K562 (cell line): ENCODE measurements at regions of chr1 and their contacts with region 1.

Region 1: GRCh38 chr1:152047730-152048402 is 11.1 kb upstream of the S100A11 start:
- DNase-seq: peak; percentile 85 to 97 (median 88)
- ATAC-seq: peak; percentile 96
- H3K4me3 ChIP-seq: peak overlapping the region; percentile 32
- H3K27ac ChIP-seq: peak overlapping the region; percentile 97
- H3K4me1 ChIP-seq: peaks cover 14 to 19% of the 10 kb centered on the region in 2 experiments
- H3K27me3 ChIP-seq: peaks cover 0 to 3% of the 10 kb centered on the region in 2 experiments; a peak in 1 of 5 replicates
- CTCF ChIP-seq: peak; percentile 73 to 88 (median 76)
- EP300 ChIP-seq: peak; percentile 76
- POLR2A ChIP-seq: peak; percentile 91
- RAD21 ChIP-seq: peak in 1 of 2 experiments; percentile 7; a peak in 1 of 4 replicates

Region 2: DNA sequence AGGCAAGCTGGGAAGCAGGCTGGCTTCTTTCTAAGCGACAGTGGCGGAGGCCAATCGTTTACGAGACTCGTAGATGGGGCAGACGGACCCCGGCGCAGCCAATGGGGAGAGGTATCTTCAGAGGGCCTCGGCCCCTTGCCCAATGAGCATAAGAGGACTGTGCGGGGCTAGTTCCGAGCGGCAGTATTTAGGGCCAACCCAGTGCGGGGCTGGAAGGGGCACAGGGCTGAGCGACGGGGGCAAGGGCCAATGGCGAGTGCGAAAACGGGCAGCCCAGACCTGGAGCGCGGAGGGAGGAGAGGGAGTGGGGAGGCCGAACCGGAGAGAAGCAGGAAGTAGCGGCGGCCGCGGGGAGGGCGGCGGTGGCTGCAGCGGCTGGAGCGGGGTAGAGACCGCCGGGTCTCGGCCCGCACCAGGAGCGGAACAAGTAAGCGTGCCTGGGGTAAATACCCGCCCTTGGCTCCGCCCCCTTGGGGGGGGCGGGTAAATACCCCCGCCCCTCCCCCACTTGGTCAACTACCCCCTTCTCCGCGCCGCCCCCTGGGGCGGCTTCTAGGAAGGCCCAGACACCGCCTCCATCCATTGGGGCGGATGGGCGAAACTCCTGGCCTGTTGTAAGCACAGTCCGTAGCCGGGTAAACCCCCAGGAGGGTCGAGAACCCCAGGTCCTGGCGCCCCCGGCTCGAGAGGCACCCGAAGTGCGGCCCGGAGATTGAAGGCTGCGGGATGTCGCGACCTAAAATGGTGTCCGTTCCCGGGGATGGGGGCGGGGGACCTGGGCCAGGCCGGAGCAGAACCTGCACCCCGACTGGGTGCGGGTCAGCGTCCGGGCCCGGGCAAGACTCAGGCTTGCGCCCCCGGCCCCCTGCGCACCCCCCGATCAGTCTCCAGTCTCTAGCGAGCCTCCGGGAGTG is 765.6 kb before region 1 on chr1 and contains the start of gene ZNF687:
- CTCF ChIA-PET with region 1: no interaction called
- POLR2A ChIA-PET with region 1: no interaction called
- in situ Hi-C with region 1: no loop called
- intact Hi-C with region 1: no loop called
- DNase-seq: peak; percentile 97 to 100 (median 98)
- ATAC-seq: peak; percentile 95
- H3K4me3 ChIP-seq: peak within 1 kb of the TSS; percentile 67
- H3K27ac ChIP-seq: peak within 1 kb of the TSS; percentile 99
- H3K4me1 ChIP-seq: peaks cover 24 to 33% of the 10 kb centered on the region in 2 experiments
- H3K27me3 ChIP-seq: no peaks in the 10 kb centered on the region
- CTCF ChIP-seq: 0 out of 6 replicates have a peak, but pooled peaks of 1 of the 3 experiments have one; percentile 6
- EP300 ChIP-seq: no peak
- POLR2A ChIP-seq: peak; percentile 11; the same call in 1 of the 2 replicates
- RAD21 ChIP-seq: no peak
- polyA plus RNA-seq, gene ZNF687: 0.13 to 0.21 TPM

Region 3: GRCh38 chr1:151790071-151790940 is 257.6 kb before region 1 on chr1 and contains the start of gene TDRKH:
- CTCF ChIA-PET with region 1: no interaction called
- POLR2A ChIA-PET with region 1: no interaction called
- in situ Hi-C with region 1: no loop called
- intact Hi-C with region 1: no loop called
- DNase-seq: peak; percentile 99 to 100 (median 99)
- ATAC-seq: peak; percentile 99
- H3K4me3 ChIP-seq: peak within 1 kb of the TSS; percentile 70
- H3K27ac ChIP-seq: peak within 1 kb of the TSS; percentile 32
- H3K4me1 ChIP-seq: peaks cover 4 to 13% of the 10 kb centered on the region in 2 experiments; a peak in 4 of 5 replicates
- H3K27me3 ChIP-seq: no peaks in the 10 kb centered on the region
- CTCF ChIP-seq: peak; percentile 46 to 60 (median 52)
- EP300 ChIP-seq: no peak
- POLR2A ChIP-seq: peak; percentile 65; the same call in 1 of the 2 replicates
- RAD21 ChIP-seq: peak; percentile 5 to 52; a peak in 2 of 4 replicates
- polyA plus RNA-seq, gene TDRKH: 5.3 to 6.9 TPM

Region 4: DNA sequence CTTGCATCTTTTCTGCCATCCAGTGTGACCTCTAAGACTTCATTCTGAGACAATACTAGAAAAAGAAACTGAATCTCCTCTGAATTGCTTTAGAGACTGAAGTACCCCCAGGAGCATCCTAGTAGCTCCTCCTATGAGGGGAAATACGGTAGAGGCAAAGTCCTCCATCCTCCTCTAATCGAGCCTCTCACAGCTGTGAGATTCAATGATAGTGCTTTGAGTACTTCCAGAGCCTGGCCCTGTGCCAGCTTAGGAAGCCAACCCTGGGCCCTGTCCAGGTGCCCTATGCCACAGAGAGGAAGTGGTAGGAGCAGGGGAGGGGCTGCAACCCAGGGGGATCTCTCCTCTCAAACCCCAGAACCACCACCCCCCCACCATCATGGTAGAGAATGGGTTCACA is 226.9 kb before region 1 on chr1:
- CTCF ChIA-PET with region 1: no interaction called
- POLR2A ChIA-PET with region 1: no interaction called
- in situ Hi-C with region 1: no loop called
- intact Hi-C with region 1: no loop called
- DNase-seq: no peak
- ATAC-seq: no peak
- H3K4me3 ChIP-seq: no peak overlapping the region
- H3K27ac ChIP-seq: no peak overlapping the region
- H3K4me1 ChIP-seq: peaks cover 3% of the 10 kb centered on the region in 2 experiments; a peak in 4 of 5 replicates
- H3K27me3 ChIP-seq: peaks cover 55 to 83% of the 10 kb centered on the region in 2 experiments
- CTCF ChIP-seq: no peak
- EP300 ChIP-seq: no peak
- POLR2A ChIP-seq: no peak
- RAD21 ChIP-seq: no peak

Region 5: GRCh38 chr1:152089014-152089676 is 41.3 kb after region 1 on chr1 and contains the start of gene TCHHL1:
- CTCF ChIA-PET with region 1: no interaction called
- POLR2A ChIA-PET with region 1: no interaction called
- in situ Hi-C with region 1: no loop called
- intact Hi-C with region 1: no loop called
- DNase-seq: no peak
- ATAC-seq: no peak
- H3K4me3 ChIP-seq: no peak within 1 kb of the TSS
- H3K27ac ChIP-seq: no peak within 1 kb of the TSS
- H3K4me1 ChIP-seq: peaks cover 0 to 8% of the 10 kb centered on the region in 2 experiments; a peak in 2 of 5 replicates
- H3K27me3 ChIP-seq: no peaks in the 10 kb centered on the region; a peak in 1 of 5 replicates
- CTCF ChIP-seq: no peak
- EP300 ChIP-seq: no peak
- POLR2A ChIP-seq: no peak
- RAD21 ChIP-seq: no peak
- polyA plus RNA-seq, gene TCHHL1: not detected

Region 6: GRCh38 chr1:152141974-152142584 is 94.2 kb after region 1 on chr1:
- CTCF ChIA-PET with region 1: interaction called, 3 read pairs
- POLR2A ChIA-PET with region 1: no interaction called
- in situ Hi-C with region 1: no loop called
- intact Hi-C with region 1: loop called (anchors 5 kb)
- DNase-seq: peak; percentile 15 to 59 (median 17)
- ATAC-seq: peak; percentile 65; the same call in 2 of the 3 replicates
- H3K4me3 ChIP-seq: no peak overlapping the region
- H3K27ac ChIP-seq: no peak overlapping the region
- H3K4me1 ChIP-seq: no peaks in the 10 kb centered on the region
- H3K27me3 ChIP-seq: no peaks in the 10 kb centered on the region
- CTCF ChIP-seq: peak; percentile 64 to 82 (median 75)
- EP300 ChIP-seq: no peak
- POLR2A ChIP-seq: no peak
- RAD21 ChIP-seq: peak; percentile 79 to 81

Region 7: GRCh38 chr1:152189657-152190442 is 142.0 kb after region 1 on chr1:
- CTCF ChIA-PET with region 1: interaction called, 34 read pairs
- POLR2A ChIA-PET with region 1: interaction called, 3 read pairs
- in situ Hi-C with region 1: no loop called
- intact Hi-C with region 1: loop called (anchors 1 kb)
- DNase-seq: peak; percentile 59 to 67 (median 61)
- ATAC-seq: peak; percentile 88
- H3K4me3 ChIP-seq: no peak overlapping the region
- H3K27ac ChIP-seq: no peak overlapping the region
- H3K4me1 ChIP-seq: peaks cover 0 to 8% of the 10 kb centered on the region in 2 experiments; a peak in 1 of 5 replicates
- H3K27me3 ChIP-seq: no peaks in the 10 kb centered on the region
- CTCF ChIP-seq: peak; percentile 79 to 85 (median 80)
- EP300 ChIP-seq: no peak
- POLR2A ChIP-seq: no peak
- RAD21 ChIP-seq: peak; percentile 62 to 78

Region 8: DNA sequence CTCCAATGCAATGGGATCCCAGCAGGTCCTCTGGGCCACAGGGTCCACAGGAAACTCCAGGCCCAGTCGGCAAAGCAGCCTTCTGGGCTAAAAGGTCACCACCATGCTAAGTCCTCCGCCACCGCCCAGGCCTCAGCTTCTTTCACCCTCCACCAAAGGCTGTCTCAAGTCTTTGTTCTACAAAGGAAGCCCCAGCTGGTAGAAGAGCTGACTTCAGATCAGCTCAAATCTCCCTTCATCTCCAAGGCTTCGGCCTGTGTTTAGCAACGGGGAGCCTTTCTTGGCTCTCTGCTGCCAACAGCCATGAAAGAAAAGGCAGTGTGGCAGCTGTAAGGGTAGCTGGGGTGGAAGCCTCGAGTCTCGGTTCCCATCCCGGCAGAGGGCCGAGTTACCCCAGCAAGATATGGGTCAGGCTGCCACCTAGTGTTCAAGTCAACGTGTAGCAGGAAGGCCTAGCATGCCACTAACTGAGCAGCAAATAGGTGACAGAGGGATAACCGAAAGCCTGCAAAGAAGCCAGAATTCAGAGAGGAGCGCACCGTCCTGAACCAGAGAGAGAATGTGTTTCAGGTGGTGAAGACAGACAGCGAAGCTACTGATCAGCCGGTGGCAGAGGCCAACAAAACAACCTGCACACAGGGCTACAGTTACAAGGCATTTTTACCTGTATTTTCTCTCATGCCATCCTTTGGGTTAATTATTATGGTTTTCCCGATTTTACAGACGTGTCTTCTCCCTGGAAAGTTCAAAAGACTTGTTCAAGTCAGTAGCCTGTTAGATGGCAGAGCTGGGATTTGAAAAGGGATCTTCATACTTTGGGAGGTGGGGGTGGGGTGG is 393.0 kb after region 1 on chr1:
- CTCF ChIA-PET with region 1: no interaction called
- POLR2A ChIA-PET with region 1: no interaction called
- in situ Hi-C with region 1: loop called (anchors 5 kb)
- intact Hi-C with region 1: no loop called
- DNase-seq: peak; percentile 68 to 83 (median 78)
- ATAC-seq: peak; percentile 99
- H3K4me3 ChIP-seq: no peak overlapping the region
- H3K27ac ChIP-seq: no peak overlapping the region
- H3K4me1 ChIP-seq: no peaks in the 10 kb centered on the region
- H3K27me3 ChIP-seq: peaks cover 0 to 7% of the 10 kb centered on the region in 2 experiments; a peak in 1 of 5 replicates
- CTCF ChIP-seq: peak; percentile 86 to 90 (median 88)
- EP300 ChIP-seq: no peak
- POLR2A ChIP-seq: no peak
- RAD21 ChIP-seq: peak; percentile 40 to 70; a peak in 3 of 4 replicates